AG04450 (cell line): ENCODE measurements at regions of chr9 and their contacts with region 1.

Region 1: GRCh38 chr9:111037381-111038305 is 627 bp downstream of the LPAR1 start:
- DNase-seq: no peak
- H3K4me3 ChIP-seq: peak overlapping the region; percentile 71
- H3K27ac ChIP-seq: peak overlapping the region; percentile 72
- H3K27me3 ChIP-seq: no peaks in the 10 kb centered on the region
- CTCF ChIP-seq: peak; percentile 15; the same call in 1 of the 2 replicates

Region 2: GRCh38 chr9:110650991-110651411 is 386.6 kb before region 1 on chr9:
- CTCF ChIA-PET with region 1: no interaction called
- POLR2A ChIA-PET with region 1: interaction called, 25 read pairs
- DNase-seq: peak; percentile 97
- H3K4me3 ChIP-seq: no peak overlapping the region
- H3K27ac ChIP-seq: peak overlapping the region; percentile 63
- H3K27me3 ChIP-seq: no peaks in the 10 kb centered on the region
- CTCF ChIP-seq: no peak

Region 3: GRCh38 chr9:110919609-110920008 is 118.0 kb before region 1 on chr9:
- CTCF ChIA-PET with region 1: no interaction called
- POLR2A ChIA-PET with region 1: interaction called, 11 read pairs
- DNase-seq: no peak
- H3K4me3 ChIP-seq: no peak overlapping the region
- H3K27ac ChIP-seq: peak overlapping the region; percentile 82
- H3K27me3 ChIP-seq: no peaks in the 10 kb centered on the region
- CTCF ChIP-seq: no peak

Region 4: GRCh38 chr9:111298731-111299598 is 261.3 kb after region 1 on chr9:
- CTCF ChIA-PET with region 1: interaction called, 17 read pairs
- POLR2A ChIA-PET with region 1: interaction called, 4 read pairs
- DNase-seq: peak; percentile 54
- H3K4me3 ChIP-seq: no peak overlapping the region
- H3K27ac ChIP-seq: peak overlapping the region; percentile 25
- H3K27me3 ChIP-seq: no peaks in the 10 kb centered on the region
- CTCF ChIP-seq: peak; percentile 73